Caco-2 (cell line): ENCODE measurements at regions of chr3 and their contacts with region 1.

Region 1: GRCh38 chr3:106140431-106140830 is 271.6 kb upstream of the CBLB start:
- DNase-seq: peak in 1 of 2 experiments; percentile 66
- H3K4me3 ChIP-seq: no peak overlapping the region
- H3K4me3 Mint-ChIP-seq: peak overlapping the region; percentile 2
- H3K27ac Mint-ChIP-seq: peak overlapping the region; percentile 18
- H3K4me1 ChIP-seq: peaks cover 21% of the 10 kb centered on the region
- H3K4me1 Mint-ChIP-seq: peaks cover 17% of the 10 kb centered on the region
- H3K27me3 ChIP-seq: no peaks in the 10 kb centered on the region
- H3K27me3 Mint-ChIP-seq: no peaks in the 10 kb centered on the region
- CTCF ChIP-seq: no peak

Region 2: DNA sequence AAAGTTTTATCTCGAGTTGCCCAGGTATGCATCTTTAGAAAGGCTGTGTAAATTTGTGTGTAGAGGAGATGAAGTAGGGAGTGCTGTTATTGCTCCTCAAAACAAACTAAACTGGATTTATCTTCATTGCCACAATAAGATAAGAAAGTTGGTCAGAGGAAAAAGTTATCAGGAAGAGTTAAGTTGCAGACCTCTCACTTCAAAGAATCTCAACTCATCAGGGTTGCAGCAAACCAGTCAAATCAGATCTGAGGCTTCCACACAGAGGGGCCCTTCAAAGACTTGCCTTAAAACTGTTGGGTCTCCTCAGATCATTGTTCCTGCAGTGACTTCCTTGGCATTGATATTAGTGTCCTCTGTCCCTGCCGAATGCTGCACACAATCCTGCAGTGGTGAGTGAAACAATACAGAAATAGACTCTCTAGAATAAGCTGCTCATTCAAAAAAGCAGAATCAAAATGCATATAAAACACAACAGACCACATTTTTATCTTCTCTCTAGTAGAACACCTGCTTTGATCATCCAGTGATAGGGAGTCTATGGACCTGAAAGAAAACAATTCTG is 80.4 kb before region 1 on chr3:
- CTCF ChIA-PET with region 1: no interaction called
- POLR2A ChIA-PET with region 1: no interaction called
- intact Hi-C with region 1: loop called (anchors 5 kb)
- DNase-seq: peak; percentile 49 to 51
- H3K4me3 ChIP-seq: no peak overlapping the region
- H3K4me3 Mint-ChIP-seq: no peak overlapping the region
- H3K27ac Mint-ChIP-seq: no peak overlapping the region
- H3K4me1 ChIP-seq: peaks cover 36% of the 10 kb centered on the region
- H3K4me1 Mint-ChIP-seq: peaks cover 16% of the 10 kb centered on the region
- H3K27me3 ChIP-seq: no peaks in the 10 kb centered on the region
- H3K27me3 Mint-ChIP-seq: no peaks in the 10 kb centered on the region
- CTCF ChIP-seq: no peak

Region 3: DNA sequence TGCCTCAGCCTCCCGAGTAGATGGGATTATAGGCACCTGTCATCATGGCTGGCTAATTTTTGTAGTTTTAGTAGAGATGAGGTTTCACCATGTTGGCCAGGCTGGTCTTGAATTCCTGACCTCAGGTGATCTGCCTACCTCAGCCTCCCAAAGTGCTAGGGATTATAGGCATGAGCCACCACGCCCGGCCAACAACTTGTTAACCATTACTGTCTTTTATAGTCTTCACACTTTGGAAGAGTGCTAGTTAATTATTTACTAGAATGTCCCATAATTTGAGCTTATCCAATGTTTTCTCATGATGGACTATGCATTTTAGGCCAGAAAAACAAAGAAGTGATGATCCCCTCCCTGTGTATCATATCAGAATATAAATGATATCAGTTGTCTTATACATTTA is 17.0 kb after region 1 on chr3:
- CTCF ChIA-PET with region 1: no interaction called
- POLR2A ChIA-PET with region 1: no interaction called
- intact Hi-C with region 1: loop called (anchors 1 kb)
- DNase-seq: peak; percentile 39 to 61
- H3K4me3 ChIP-seq: no peak overlapping the region
- H3K4me3 Mint-ChIP-seq: no peak overlapping the region
- H3K27ac Mint-ChIP-seq: no peak overlapping the region
- H3K4me1 ChIP-seq: peaks cover 9% of the 10 kb centered on the region
- H3K4me1 Mint-ChIP-seq: no peaks in the 10 kb centered on the region
- H3K27me3 ChIP-seq: no peaks in the 10 kb centered on the region
- H3K27me3 Mint-ChIP-seq: no peaks in the 10 kb centered on the region
- CTCF ChIP-seq: no peak

Region 4: DNA sequence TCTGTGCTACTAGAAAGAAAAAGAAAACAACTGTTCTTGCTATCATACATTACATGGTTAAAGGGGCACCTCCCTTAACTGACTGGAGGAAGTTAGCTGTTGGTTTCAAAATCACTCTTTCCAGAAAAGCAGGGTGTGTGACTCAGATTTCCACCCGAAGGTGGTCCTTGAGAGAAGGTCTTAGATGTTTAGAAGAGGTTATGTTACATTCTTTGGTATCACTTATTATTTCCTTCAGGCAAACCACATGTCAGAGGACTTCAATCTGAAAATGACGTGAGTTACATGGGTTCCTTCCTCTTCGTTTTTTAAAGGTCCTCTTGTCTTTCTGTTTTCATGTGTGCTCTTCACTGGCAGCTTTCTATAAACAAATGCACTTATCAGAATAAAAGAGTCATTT is 36.3 kb after region 1 on chr3:
- CTCF ChIA-PET with region 1: no interaction called
- POLR2A ChIA-PET with region 1: no interaction called
- intact Hi-C with region 1: no loop called
- DNase-seq: no peak
- H3K4me3 ChIP-seq: no peak overlapping the region
- H3K4me3 Mint-ChIP-seq: no peak overlapping the region
- H3K27ac Mint-ChIP-seq: no peak overlapping the region
- H3K4me1 ChIP-seq: no peaks in the 10 kb centered on the region
- H3K4me1 Mint-ChIP-seq: no peaks in the 10 kb centered on the region
- H3K27me3 ChIP-seq: no peaks in the 10 kb centered on the region
- H3K27me3 Mint-ChIP-seq: peaks cover 2% of the 10 kb centered on the region
- CTCF ChIP-seq: no peak

Region 5: GRCh38 chr3:106242781-106243180 is 102.3 kb after region 1 on chr3:
- CTCF ChIA-PET with region 1: no interaction called
- POLR2A ChIA-PET with region 1: no interaction called
- intact Hi-C with region 1: no loop called
- DNase-seq: no peak
- H3K4me3 ChIP-seq: no peak overlapping the region
- H3K4me3 Mint-ChIP-seq: no peak overlapping the region
- H3K27ac Mint-ChIP-seq: no peak overlapping the region
- H3K4me1 ChIP-seq: no peaks in the 10 kb centered on the region
- H3K4me1 Mint-ChIP-seq: no peaks in the 10 kb centered on the region
- H3K27me3 ChIP-seq: no peaks in the 10 kb centered on the region
- H3K27me3 Mint-ChIP-seq: no peaks in the 10 kb centered on the region
- CTCF ChIP-seq: no peak

Region 6: DNA sequence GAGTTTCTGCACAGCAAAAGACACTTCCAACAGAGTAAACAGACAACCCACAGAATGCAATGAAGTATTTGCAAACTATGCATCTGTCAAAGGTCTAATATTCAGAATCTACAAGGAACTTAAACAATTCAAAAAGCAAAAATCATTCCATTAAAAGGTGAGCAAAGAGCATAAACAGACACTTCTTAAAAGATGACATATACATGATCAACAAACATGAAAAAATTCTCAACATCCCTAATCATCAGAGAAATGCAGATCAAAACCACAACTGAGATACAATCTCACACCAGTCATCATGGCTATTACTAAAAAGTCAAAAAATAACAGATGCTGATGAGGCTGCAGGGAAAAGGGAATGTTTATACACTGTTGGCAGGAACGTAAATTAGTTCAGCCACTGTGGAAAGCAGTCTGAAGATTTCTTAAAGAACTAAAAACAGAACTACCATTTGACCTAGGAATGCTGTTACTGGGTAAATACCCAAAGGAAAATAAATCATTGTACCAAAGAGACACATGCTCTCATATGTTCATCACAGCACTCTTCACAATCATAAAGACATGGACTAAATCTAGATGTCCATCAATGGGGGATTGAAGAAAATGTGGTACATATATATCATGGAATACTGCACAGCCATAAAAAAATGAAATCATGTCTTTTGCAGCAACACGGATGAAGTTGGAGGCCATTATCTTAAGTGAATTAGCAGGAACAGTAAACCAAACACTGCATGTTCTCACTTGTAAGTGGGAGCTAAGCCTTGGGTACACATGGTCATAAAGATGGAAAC is 121.7 kb after region 1 on chr3:
- CTCF ChIA-PET with region 1: no interaction called
- POLR2A ChIA-PET with region 1: no interaction called
- intact Hi-C with region 1: loop called (anchors 5 kb)
- DNase-seq: no peak
- H3K4me3 ChIP-seq: no peak overlapping the region
- H3K4me3 Mint-ChIP-seq: no peak overlapping the region
- H3K27ac Mint-ChIP-seq: no peak overlapping the region
- H3K4me1 ChIP-seq: peaks cover 31% of the 10 kb centered on the region
- H3K4me1 Mint-ChIP-seq: peaks cover 19% of the 10 kb centered on the region
- H3K27me3 ChIP-seq: no peaks in the 10 kb centered on the region
- H3K27me3 Mint-ChIP-seq: no peaks in the 10 kb centered on the region
- CTCF ChIP-seq: no peak